ENCODE measurements at regions of chr17 and their contacts with region 1.

Region 1: DNA sequence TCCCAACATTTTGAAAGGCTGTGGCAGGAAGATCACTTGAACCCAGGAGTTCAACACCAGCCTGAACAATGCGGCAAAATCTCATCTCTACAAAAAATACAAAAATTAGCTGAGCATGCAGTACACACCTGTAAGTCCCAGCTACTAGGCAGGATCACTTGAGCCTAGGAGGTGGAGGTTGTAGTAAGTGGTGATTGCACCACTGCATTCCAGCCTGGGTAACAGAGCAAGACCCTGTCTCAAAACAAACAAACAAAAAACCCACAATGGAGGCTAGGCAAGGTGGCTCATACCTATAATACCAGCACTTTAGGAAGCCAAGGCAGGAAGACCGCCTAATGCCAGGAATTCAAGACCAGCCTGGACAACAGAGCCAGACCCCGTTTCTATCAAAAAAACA is 12.0 kb downstream of the APPBP2 start:
- DNase-seq: no peak
- ATAC-seq: no peak
- H3K4me3 ChIP-seq: no peak overlapping the region
- H3K27ac ChIP-seq: no peak overlapping the region
- H3K4me1 ChIP-seq: peaks cover 3% of the 10 kb centered on the region
- H3K27me3 ChIP-seq: no peaks in the 10 kb centered on the region
- CTCF ChIP-seq: no peak
- POLR2A ChIP-seq: no peak
- RAD21 ChIP-seq: no peak

Region 2: GRCh38 chr17:60392845-60393702 is 121.0 kb before region 1 on chr17:
- CTCF ChIA-PET with region 1: no interaction called
- POLR2A ChIA-PET with region 1: no interaction called
- dilution Hi-C with region 1: no loop called
- in situ Hi-C with region 1: no loop called
- intact Hi-C with region 1: no loop called
- DNase-seq: peak; percentile 60
- ATAC-seq: 0 out of 2 replicates have a peak, but pooled peaks have one; percentile 0
- H3K4me3 ChIP-seq: peak overlapping the region; percentile 63
- H3K27ac ChIP-seq: peak overlapping the region; percentile 95
- H3K4me1 ChIP-seq: peaks cover 2% of the 10 kb centered on the region; the same call in 1 of the 2 replicates
- H3K27me3 ChIP-seq: no peaks in the 10 kb centered on the region
- CTCF ChIP-seq: no peak
- POLR2A ChIP-seq: no peak
- RAD21 ChIP-seq: no peak

Region 3: GRCh38 chr17:60473788-60474187 is 40.3 kb before region 1 on chr17:
- CTCF ChIA-PET with region 1: no interaction called
- POLR2A ChIA-PET with region 1: no interaction called
- dilution Hi-C with region 1: no loop called
- in situ Hi-C with region 1: no loop called
- intact Hi-C with region 1: loop called (anchors 5 kb)
- DNase-seq: peak; percentile 64
- ATAC-seq: no peak
- H3K4me3 ChIP-seq: no peak overlapping the region
- H3K27ac ChIP-seq: no peak overlapping the region
- H3K4me1 ChIP-seq: peaks cover 5% of the 10 kb centered on the region
- H3K27me3 ChIP-seq: no peaks in the 10 kb centered on the region
- CTCF ChIP-seq: no peak
- POLR2A ChIP-seq: no peak
- RAD21 ChIP-seq: no peak